Activated CD8-positive, alpha-beta T cell treated with anti-CD3 and anti-CD28 coated beads, Interleukin-2, amount 10 ng/mL, durations not matched to agents 7 days and 5 days (primary cell): ENCODE measurements at regions of chr11 and their contacts with region 1.

Region 1: GRCh38 chr11:117946842-117947526 is 17.8 kb upstream of the TMPRSS13 start:
- DNase-seq: peak; percentile 89
- ATAC-seq: peak; percentile 34
- H3K4me3 Mint-ChIP-seq: no peak overlapping the region
- H3K27ac Mint-ChIP-seq: peak overlapping the region; percentile 76
- H3K4me1 Mint-ChIP-seq: peaks cover 90% of the 10 kb centered on the region
- H3K27me3 Mint-ChIP-seq: no peaks in the 10 kb centered on the region

Region 2: GRCh38 chr11:117807482-117808327 is 139.3 kb before region 1 on chr11:
- CTCF ChIA-PET with region 1: interaction called, 124 read pairs
- POLR2A ChIA-PET with region 1: no interaction called
- DNase-seq: peak; percentile 86
- ATAC-seq: peak; percentile 66
- H3K4me3 Mint-ChIP-seq: no peak overlapping the region
- H3K27ac Mint-ChIP-seq: no peak overlapping the region
- H3K4me1 Mint-ChIP-seq: peaks cover 25% of the 10 kb centered on the region
- H3K27me3 Mint-ChIP-seq: no peaks in the 10 kb centered on the region

Region 3: GRCh38 chr11:117851106-117851505 is 95.9 kb before region 1 on chr11:
- CTCF ChIA-PET with region 1: interaction called, 212 read pairs
- POLR2A ChIA-PET with region 1: no interaction called
- DNase-seq: no peak
- ATAC-seq: no peak
- H3K4me3 Mint-ChIP-seq: no peak overlapping the region
- H3K27ac Mint-ChIP-seq: no peak overlapping the region
- H3K4me1 Mint-ChIP-seq: peaks cover 9% of the 10 kb centered on the region
- H3K27me3 Mint-ChIP-seq: peaks cover 26% of the 10 kb centered on the region

Region 4: DNA sequence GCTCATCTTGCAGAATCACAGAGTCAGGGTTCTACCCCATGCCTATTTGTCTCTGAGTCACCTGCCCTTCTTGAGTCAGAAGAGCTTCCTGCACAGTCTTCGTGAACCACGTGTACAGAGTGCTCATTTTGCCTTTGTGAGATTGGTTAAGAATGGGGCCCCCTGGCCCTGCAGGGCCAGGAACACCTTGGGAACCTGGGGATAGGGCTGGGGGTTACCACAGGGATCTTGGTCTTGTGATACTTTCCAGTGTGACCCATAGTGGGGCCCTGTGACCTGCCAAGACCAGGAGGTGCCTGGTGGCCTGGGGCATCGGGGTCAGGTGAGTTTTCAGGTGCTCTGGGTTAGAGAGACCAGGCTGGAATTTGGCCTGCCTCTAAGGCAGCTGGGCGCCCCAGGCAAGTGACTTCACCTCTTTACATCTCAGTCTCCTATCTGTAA is 27.2 kb before region 1 on chr11:
- CTCF ChIA-PET with region 1: interaction called, 39 read pairs
- POLR2A ChIA-PET with region 1: no interaction called
- DNase-seq: no peak
- ATAC-seq: peak; percentile 34
- H3K4me3 Mint-ChIP-seq: no peak overlapping the region
- H3K27ac Mint-ChIP-seq: no peak overlapping the region
- H3K4me1 Mint-ChIP-seq: peaks cover 26% of the 10 kb centered on the region
- H3K27me3 Mint-ChIP-seq: no peaks in the 10 kb centered on the region

Region 5: GRCh38 chr11:117985953-117986887 is 39.2 kb after region 1 on chr11 and contains the start of gene IL10RA:
- CTCF ChIA-PET with region 1: interaction called, 401 read pairs
- POLR2A ChIA-PET with region 1: interaction called, 146 read pairs
- DNase-seq: peak; percentile 88
- ATAC-seq: peak; percentile 89
- H3K4me3 Mint-ChIP-seq: peak within 1 kb of the TSS; percentile 96
- H3K27ac Mint-ChIP-seq: peak within 1 kb of the TSS; percentile 97
- H3K4me1 Mint-ChIP-seq: peaks cover 70% of the 10 kb centered on the region
- H3K27me3 Mint-ChIP-seq: no peaks in the 10 kb centered on the region
- total RNA-seq, gene IL10RA: 202 to 210 TPM

Region 6: DNA sequence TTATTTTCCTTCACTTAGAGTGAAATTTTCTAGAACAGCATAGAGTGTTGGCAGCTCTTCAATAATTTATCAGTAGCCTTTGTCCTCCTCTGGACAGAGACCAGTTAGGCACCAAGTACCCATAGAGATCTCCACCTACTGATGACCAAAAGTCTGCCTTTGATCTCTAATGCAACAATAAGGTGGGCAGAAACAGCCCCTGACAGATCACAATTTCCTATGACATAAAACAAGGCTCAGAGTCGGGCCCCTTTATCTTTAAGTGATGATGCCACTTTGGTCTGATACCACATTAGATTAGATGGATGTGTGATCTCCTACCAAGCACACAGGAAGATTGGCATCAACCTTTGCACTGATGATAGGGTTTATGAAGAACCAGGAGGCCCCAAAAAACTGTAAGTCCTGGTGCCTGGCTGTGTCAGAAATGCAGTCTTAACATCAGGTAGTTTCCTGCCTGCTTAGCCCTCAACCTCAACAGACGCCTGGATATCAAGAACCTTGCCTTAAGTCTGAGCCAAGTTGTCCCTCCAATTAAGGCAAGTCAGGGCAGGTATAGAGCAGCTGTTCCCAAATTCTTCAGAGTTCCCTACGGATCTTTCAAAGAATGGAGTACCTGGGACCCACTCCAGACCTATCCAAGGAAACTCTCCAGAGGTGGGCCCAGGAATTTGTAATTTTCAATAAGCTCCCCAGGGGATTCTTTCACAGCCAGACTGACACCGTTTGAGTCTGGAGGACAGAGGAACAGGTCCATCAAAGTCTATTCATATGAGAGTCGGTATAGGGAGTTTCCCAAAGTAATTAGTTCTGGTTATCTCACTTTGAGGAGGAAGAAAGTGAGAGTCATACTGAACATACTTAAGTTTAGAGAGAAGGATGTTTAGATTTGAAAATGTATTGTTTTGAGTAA is 99.3 kb after region 1 on chr11:
- CTCF ChIA-PET with region 1: interaction called, 432 read pairs
- POLR2A ChIA-PET with region 1: interaction called, 31 read pairs
- DNase-seq: peak; percentile 50
- ATAC-seq: peak; percentile 76
- H3K4me3 Mint-ChIP-seq: peak overlapping the region; percentile 9
- H3K27ac Mint-ChIP-seq: peak overlapping the region; percentile 77
- H3K4me1 Mint-ChIP-seq: peaks cover 91% of the 10 kb centered on the region
- H3K27me3 Mint-ChIP-seq: no peaks in the 10 kb centered on the region